ENCODE measurements at regions of chr17 and their contacts with region 1.

Region 1: GRCh38 chr17:28644985-28645939 is at the start of gene BLTP2:
- H3K4me3 ChIP-seq: peak within 1 kb of the TSS; percentile 70
- H3K27ac ChIP-seq: peak within 1 kb of the TSS; percentile 55
- H3K4me1 ChIP-seq: peaks cover 5% of the 10 kb centered on the region
- CTCF ChIP-seq: no peak; the same call in 1 of the 2 replicates

Region 2: GRCh38 chr17:27947005-27947406 is 698.3 kb before region 1 on chr17:
- CTCF ChIA-PET with region 1: no interaction called
- POLR2A ChIA-PET with region 1: no interaction called
- H3K4me3 ChIP-seq: no peak overlapping the region
- H3K27ac ChIP-seq: no peak overlapping the region
- H3K4me1 ChIP-seq: no peaks in the 10 kb centered on the region
- CTCF ChIP-seq: no peak

Region 3: GRCh38 chr17:28571255-28572122 is 73.8 kb before region 1 on chr17 and contains the start of gene PIGS:
- CTCF ChIA-PET with region 1: interaction called, 3 read pairs
- POLR2A ChIA-PET with region 1: interaction called, 14 read pairs
- H3K4me3 ChIP-seq: peak within 1 kb of the TSS; percentile 73
- H3K27ac ChIP-seq: peak within 1 kb of the TSS; percentile 84
- H3K4me1 ChIP-seq: peaks cover 11% of the 10 kb centered on the region
- CTCF ChIP-seq: no peak

Region 4: DNA sequence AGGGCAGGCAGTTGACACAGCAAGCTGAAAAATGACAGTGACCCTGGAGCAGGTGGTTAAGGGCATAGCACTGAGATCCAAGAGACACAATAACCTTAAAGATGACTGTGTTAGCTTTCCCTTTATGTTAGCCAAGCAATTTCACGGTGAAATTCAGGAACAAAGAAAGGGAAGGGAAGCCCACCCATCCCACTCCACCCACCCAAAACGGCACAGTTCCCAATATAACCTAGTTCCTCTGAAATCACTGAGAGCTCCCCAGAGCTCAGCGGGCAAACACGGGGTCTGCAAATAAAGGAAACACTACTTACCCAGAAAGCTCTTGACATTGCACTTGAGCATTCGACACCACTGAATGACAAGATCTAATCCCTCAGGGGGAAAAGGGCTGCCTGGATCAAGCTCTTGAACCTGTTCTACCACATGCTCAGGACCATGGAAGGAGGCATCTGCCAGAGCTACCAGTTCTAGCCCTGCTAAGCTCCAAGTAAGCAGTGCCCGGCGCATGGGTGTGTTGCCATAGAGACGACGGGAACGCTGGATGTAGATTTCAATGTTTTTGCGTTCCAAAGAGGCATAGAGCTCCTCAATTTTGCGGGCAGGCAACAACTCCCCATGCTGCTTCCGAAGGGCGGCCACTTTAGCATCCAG is 10.9 kb before region 1 on chr17:
- CTCF ChIA-PET with region 1: interaction called, 11 read pairs
- POLR2A ChIA-PET with region 1: interaction called, 30 read pairs
- H3K4me3 ChIP-seq: no peak overlapping the region
- H3K27ac ChIP-seq: no peak overlapping the region
- H3K4me1 ChIP-seq: no peaks in the 10 kb centered on the region
- CTCF ChIP-seq: no peak

Region 5: DNA sequence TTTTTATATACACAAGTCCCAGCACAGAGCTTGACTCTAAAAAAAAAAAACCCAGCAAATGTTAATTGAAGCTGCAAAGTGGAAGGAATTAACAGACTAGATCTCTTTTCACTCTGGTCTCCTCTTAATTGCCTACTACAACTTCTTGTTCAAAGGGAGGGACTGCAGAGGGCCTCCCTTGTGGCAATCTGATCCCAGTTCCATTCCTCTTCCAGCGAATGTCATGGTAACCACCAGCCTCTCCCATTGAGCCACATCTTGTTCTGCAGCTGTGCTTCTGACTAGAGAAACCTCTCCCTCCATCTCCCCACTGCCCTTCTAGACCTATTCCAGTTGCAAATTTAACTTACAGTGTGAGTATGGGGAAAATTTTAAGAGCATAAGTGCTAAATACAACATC is 22.6 kb after region 1 on chr17:
- CTCF ChIA-PET with region 1: interaction called, 42 read pairs
- POLR2A ChIA-PET with region 1: interaction called, 8 read pairs
- H3K4me3 ChIP-seq: no peak overlapping the region
- H3K27ac ChIP-seq: no peak overlapping the region
- H3K4me1 ChIP-seq: peaks cover 4% of the 10 kb centered on the region; the same call in 1 of the 2 replicates
- CTCF ChIP-seq: no peak

Region 6: DNA sequence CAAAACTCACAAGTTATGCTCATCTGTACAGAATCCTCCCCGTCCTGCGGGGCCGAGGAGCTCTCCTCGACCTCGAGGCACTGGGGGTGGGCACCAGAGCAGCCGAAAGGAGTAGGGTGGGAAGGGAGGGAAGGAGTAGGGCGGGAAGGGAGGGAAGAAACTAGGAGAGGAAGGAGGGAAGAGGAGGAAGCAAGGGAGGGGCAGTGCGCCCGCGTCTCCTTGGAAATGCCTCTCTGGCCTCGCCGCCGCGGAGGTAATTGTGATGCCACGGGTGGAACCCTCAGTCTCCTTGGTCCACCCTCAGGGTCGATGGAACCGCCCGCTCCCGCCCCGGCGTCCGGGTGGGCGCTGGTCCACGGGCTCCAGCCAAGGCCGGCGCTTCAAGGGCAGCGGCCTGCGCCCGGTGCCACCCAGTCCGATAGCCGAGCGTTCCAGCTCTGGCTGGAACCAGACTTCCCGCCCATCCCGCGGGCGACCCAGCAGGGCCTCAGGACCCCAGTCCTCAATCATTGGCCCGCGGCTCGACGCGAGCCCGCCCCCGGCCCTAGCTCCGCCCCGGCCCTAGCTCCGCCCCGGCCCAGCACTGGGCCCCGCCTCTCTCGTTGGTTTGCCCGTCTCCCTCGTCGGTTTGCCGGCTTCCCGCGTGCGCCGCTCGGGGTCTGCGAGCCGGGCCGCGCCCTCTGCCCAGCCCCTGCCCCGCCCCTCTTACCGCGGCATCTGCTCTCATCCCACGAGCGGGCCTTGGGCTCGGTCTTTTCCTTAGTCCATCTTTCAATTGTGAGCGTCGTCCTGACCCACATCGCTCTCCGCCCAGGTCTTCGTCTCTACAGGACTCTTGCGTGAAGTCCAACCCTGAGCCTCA is 65.8 kb after region 1 on chr17:
- CTCF ChIA-PET with region 1: interaction called, 5 read pairs
- POLR2A ChIA-PET with region 1: interaction called, 26 read pairs
- H3K4me3 ChIP-seq: peak overlapping the region; percentile 51
- H3K27ac ChIP-seq: peak overlapping the region; percentile 89
- H3K4me1 ChIP-seq: peaks cover 3% of the 10 kb centered on the region
- CTCF ChIP-seq: no peak

Region 7: DNA sequence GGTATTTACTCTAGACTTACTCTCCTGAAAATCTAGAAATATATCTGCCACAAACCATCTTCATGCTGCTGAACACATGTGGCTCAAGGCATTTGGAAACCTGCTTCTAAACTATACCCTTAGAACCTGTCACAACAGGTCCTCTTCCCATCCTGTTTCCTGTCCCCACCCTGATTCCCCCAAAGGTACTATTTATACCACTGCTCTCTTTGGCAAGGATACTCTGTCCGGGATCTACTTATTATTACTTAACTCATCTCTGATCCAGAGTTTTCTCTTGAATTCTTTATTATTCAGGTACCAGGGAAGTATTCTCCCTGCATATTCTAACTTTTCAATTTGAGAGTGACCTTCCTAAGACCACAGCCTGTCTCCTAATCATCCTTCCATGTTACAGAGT is 131.9 kb after region 1 on chr17:
- CTCF ChIA-PET with region 1: no interaction called
- POLR2A ChIA-PET with region 1: no interaction called
- H3K4me3 ChIP-seq: no peak overlapping the region
- H3K27ac ChIP-seq: 0 out of 2 replicates have a peak overlapping the region, but pooled peaks have one; percentile 14
- H3K4me1 ChIP-seq: 0 out of 2 replicates have a peak, but pooled peaks cover 4% of the 10 kb centered on the region
- CTCF ChIP-seq: no peak

Region 8: GRCh38 chr17:28908640-28909167 is 263.4 kb after region 1 on chr17:
- CTCF ChIA-PET with region 1: no interaction called
- POLR2A ChIA-PET with region 1: no interaction called
- H3K4me3 ChIP-seq: no peak overlapping the region
- H3K27ac ChIP-seq: no peak overlapping the region
- H3K4me1 ChIP-seq: no peaks in the 10 kb centered on the region
- CTCF ChIP-seq: no peak

Measured in HEK293 (cell line).